Left colon (tissue), 2 donors: ENCODE measurements at regions of chr10 and their contacts with region 1.

Region 1: DNA sequence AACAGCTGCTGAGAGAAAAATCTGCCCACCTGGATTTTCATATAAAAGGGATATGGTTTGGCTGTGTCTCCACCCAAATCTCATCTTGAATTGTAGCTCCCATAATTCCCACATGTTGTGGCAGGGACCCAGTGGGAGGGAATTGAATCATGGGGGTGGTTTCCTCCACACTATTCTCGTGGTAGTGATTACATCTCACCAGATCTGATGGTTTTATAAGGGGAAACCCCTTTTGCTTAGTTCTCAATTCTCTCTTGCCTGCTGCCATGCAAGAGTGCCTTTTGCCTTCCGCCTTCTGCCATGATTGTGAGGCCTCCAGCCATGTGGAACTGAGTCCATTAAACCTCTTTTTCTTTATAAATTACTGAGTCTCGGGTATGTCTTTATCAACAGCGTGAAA is 20.8 kb upstream of the MKI67 start:
- DNase-seq: no peak
- ATAC-seq: no peak

Region 2: DNA sequence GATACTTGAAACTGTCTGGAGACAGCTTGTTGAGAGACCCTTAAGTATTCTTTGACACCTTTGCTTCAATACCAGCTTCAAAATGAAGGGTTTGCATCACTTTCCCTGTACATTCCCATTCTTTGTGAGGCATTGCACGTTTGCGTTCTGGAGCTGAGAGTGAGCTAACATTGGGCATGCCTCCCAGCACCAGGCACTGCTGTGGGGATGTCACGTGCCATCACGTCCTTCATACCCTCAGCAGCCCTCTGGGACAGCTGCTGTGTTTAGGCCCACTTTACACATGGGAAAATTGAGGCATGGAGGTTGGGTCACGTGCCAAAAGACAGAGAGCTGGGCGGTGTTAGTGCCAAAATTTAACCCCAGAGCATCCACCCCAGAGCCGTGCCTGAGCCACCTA is 884.5 kb before region 1 on chr10:
- intact Hi-C with region 1: no loop called
- DNase-seq: no peak
- ATAC-seq: no peak

Region 3: GRCh38 chr10:127872871-127873600 is 274.0 kb before region 1 on chr10:
- intact Hi-C with region 1: no loop called
- DNase-seq: peak; percentile 73 to 83
- ATAC-seq: peak; percentile 96

Region 4: DNA sequence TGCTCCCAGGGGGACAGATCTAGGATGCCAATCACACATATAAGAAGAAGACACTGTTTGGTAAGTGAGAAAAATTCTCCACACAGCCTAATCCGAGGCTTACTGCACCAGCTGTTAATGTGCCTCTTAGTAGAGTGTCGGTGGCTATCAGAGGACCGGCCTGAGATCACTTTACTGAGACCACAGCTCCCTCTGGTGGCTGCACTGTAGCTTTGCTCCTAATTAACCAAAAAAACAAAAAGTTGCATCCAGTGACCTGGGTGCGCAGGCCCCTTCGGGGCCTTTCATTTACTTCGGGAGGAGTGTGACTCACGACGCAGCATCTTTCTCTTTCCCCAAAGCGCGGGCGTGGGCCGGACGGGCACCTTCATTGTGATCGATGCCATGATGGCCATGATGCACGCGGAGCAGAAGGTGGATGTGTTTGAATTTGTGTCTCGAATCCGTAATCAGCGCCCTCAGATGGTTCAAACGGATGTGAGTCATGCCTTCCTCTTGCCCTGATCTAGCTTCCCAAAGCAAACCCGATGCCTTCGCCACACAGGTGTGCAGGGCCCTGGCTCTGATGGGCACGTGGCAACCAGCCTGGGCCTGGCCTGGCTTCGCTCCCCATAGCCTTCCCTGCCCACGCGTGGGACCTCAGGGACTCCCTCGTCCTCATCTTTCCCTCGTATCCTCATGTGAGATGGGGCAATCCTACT is 77.6 kb before region 1 on chr10:
- intact Hi-C with region 1: loop called in 1 of 2 experiments (anchors 10 kb)
- DNase-seq: peak; percentile 58 to 66
- ATAC-seq: peak; percentile 84

Region 5: GRCh38 chr10:128247576-128247975 is 100.5 kb after region 1 on chr10:
- intact Hi-C with region 1: no loop called
- DNase-seq: no peak
- ATAC-seq: no peak

Region 6: DNA sequence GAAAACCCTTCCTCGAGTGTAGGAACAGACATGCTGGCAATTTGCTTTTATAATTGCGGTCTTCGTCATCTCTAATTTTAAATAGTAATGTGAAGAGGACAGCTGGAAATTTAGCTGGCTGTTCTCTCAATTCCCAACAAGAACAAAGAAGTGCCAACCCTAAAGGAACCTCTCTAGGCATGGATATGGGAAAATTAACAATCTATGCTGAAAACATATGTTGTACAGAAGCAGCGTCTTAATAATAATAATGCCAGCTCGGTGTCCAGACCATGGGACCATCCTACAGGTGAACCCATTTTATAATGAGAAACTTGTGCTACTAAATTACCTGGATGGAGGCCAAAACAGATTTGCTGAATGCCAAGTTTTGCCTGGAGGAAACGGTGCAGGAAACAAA is 678.6 kb after region 1 on chr10:
- intact Hi-C with region 1: no loop called
- DNase-seq: no peak
- ATAC-seq: no peak